Activated B cell treated with CpG ODN at 0.5 μM for 24 hours (primary cell): ENCODE measurements at regions of chr6 and their contacts with region 1.

Region 1: GRCh38 chr6:52995913-52996645 is 995 bp upstream of the GSTA4 start:
- DNase-seq: peak; percentile 27
- ATAC-seq: no peak
- H3K4me3 Mint-ChIP-seq: peak overlapping the region; percentile 94
- H3K27ac Mint-ChIP-seq: peak overlapping the region; percentile 99
- H3K4me1 Mint-ChIP-seq: peaks cover 27% of the 10 kb centered on the region
- H3K27me3 Mint-ChIP-seq: peaks cover 5% of the 10 kb centered on the region
- CTCF ChIP-seq: no peak

Region 2: DNA sequence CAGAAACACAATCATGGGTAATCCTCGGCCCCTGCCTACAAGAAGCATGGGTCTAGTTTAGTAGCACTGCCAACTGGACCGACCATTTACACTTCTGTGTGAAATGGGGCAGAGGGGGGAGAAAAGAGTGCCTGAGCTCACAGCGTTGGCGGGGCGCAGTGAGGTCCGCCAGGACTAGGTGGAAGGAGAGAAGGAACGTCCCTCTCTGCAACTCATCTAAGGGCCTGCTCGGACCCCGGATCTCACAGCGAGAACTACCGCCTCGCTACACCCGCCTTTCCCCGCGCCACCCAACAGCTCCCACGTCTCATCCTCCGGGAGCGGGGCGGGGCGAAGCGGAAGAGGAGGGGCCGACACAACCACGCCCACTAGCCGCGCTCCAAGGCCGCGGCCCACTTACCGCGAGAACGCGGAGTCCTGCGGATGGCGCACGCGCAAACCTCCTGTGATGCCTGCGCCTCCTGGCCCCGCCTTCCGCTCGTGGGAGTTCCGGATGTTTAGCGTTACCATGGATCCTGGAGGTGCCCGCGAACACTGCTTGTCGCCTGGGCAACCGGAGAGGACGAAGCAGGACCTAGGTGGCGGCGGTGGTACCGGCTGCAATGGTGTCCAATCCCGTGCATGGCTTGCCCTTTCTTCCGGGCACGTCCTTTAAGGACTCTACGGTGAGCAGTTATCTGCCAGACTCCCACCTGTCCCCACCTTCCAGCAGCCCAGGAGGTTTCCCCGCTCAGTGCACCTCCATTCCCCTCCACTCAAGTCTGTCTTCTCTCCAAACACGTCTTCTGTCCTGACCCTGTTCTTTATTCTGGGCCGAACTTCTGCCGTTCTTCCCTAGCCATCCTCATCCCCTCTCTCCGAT is 576.0 kb before region 1 on chr6 and contains the start of gene EFHC1:
- CTCF ChIA-PET with region 1: no interaction called
- POLR2A ChIA-PET with region 1: no interaction called
- intact Hi-C with region 1: loop called (anchors 1 kb)
- DNase-seq: peak; percentile 97
- ATAC-seq: peak; percentile 90
- H3K4me3 Mint-ChIP-seq: no peak within 1 kb of the TSS
- H3K27ac Mint-ChIP-seq: no peak within 1 kb of the TSS
- H3K4me1 Mint-ChIP-seq: peaks cover 16% of the 10 kb centered on the region
- H3K27me3 Mint-ChIP-seq: no peaks in the 10 kb centered on the region
- CTCF ChIP-seq: no peak
- total RNA-seq, gene EFHC1: 15.8 and 23.2 TPM in 2 replicates

Region 3: DNA sequence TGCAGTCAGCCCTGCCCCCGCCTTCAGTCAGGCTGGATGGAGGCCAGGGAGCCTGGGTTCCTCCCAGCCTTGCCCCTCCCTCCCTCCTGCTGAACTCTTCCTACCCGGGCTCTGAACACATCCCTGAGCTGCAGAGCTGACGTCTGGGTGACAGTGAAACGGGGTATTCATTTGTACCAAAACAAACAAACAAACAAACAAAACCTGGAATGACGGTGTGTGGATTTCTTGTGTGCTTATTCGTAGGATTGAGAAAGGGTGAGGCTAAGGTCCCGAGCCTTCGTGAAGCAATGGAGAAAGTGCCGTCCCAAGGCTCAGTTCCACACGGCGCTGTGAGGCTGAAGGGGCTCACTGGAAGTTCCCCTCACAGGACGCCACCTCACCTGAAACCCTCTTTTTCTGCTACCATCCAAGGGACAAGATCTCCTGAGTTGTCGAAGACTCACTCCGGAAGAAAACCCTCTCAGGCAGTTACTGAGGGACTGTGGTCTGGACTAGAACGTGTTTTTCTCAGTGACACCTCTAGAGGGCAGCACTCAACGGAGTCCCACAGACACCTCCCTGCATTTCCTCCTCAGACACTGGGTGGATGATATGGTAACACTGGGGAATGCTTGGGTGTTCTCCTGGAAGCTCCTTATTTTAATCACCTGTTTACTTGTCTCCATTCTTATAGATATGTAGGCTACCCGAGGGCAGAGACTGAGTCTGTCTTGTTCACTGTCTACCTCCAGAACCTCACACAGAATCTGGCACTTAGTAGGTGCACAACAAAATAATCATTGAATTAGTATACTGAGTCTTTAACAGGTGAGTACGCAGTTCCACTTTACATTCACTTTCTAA is 113.9 kb before region 1 on chr6:
- CTCF ChIA-PET with region 1: no interaction called
- POLR2A ChIA-PET with region 1: no interaction called
- intact Hi-C with region 1: loop called (anchors 1 kb)
- DNase-seq: peak; percentile 31
- ATAC-seq: peak; percentile 98
- H3K4me3 Mint-ChIP-seq: peak overlapping the region; percentile 82
- H3K27ac Mint-ChIP-seq: peak overlapping the region; percentile 20
- H3K4me1 Mint-ChIP-seq: peaks cover 2% of the 10 kb centered on the region
- H3K27me3 Mint-ChIP-seq: no peaks in the 10 kb centered on the region
- CTCF ChIP-seq: peak; percentile 75

Region 4: GRCh38 chr6:53064726-53065215 is 68.7 kb after region 1 on chr6:
- CTCF ChIA-PET with region 1: interaction called, 4 read pairs
- POLR2A ChIA-PET with region 1: interaction called, 12 read pairs
- intact Hi-C with region 1: no loop called
- DNase-seq: peak; percentile 82
- ATAC-seq: peak; percentile 81
- H3K4me3 Mint-ChIP-seq: peak overlapping the region; percentile 100
- H3K27ac Mint-ChIP-seq: peak overlapping the region; percentile 99
- H3K4me1 Mint-ChIP-seq: peaks cover 57% of the 10 kb centered on the region
- H3K27me3 Mint-ChIP-seq: no peaks in the 10 kb centered on the region
- CTCF ChIP-seq: no peak

Region 5: DNA sequence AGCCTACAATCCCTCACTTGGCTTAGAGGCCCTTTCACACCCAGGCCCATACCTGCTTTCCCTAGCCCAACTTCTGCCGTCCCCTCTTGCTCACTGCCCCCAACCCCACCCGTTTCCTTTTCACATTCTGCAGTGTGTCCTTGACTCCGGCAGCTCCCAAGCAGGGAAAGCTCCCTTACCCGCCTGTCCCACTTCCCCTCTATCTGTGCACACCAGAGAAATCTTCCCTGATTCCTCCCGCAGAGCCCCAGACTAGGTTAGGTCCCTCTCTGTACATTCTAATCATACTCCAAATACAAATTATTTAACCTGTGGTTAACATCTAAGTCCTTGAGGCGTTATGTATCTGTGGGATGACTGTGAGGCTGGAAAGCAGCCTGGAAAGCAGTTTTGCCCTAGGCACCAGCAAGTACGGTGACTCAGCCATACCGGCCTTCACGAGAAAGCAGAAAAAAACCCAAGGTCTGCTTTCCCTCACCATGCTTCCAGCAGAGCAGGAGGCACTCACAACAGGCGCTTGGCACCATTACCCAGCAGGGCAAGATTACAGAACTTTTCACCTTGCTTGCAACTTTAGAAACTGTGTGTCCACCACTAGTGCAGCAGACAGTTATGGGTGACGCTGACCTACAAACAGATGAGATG is 330.4 kb after region 1 on chr6:
- CTCF ChIA-PET with region 1: no interaction called
- POLR2A ChIA-PET with region 1: no interaction called
- intact Hi-C with region 1: no loop called
- DNase-seq: no peak
- ATAC-seq: no peak
- H3K4me3 Mint-ChIP-seq: peak overlapping the region; percentile 6
- H3K27ac Mint-ChIP-seq: peak overlapping the region; percentile 84
- H3K4me1 Mint-ChIP-seq: peaks cover 79% of the 10 kb centered on the region
- H3K27me3 Mint-ChIP-seq: no peaks in the 10 kb centered on the region
- CTCF ChIP-seq: no peak

Region 6: DNA sequence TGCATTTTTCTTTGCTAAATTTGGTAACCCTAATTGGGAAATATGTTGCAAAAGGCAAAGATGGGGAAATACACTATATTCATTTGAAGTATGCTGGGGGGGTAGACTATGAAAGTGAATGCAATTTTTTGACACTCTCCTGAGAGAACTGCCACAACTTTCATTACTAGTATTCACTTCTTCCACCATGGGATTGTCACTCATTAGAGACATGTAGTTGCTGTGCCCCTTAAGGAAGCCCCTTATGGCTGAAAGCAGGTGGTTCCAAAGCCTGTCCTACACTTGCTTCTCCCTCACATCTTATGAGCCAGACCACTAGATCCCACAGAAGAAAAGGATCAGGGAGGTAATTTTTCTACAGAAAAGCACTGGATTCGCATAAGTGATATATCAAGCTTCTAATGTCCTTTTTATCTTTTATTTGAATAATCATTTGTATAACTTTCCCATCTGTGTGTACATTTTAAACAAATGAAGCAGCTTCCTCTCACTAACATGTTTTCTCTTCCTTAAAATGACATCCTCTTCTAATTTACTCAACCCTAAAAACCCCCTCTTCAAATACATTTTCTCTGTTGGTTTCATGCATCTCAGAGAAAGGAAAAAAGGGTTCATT is 465.1 kb after region 1 on chr6:
- CTCF ChIA-PET with region 1: no interaction called
- POLR2A ChIA-PET with region 1: no interaction called
- intact Hi-C with region 1: loop called (anchors 2 kb)
- DNase-seq: no peak
- ATAC-seq: peak; percentile 72
- H3K4me3 Mint-ChIP-seq: peak overlapping the region; percentile 72
- H3K27ac Mint-ChIP-seq: peak overlapping the region; percentile 96
- H3K4me1 Mint-ChIP-seq: peaks cover 94% of the 10 kb centered on the region
- H3K27me3 Mint-ChIP-seq: no peaks in the 10 kb centered on the region
- CTCF ChIP-seq: no peak

Region 7: DNA sequence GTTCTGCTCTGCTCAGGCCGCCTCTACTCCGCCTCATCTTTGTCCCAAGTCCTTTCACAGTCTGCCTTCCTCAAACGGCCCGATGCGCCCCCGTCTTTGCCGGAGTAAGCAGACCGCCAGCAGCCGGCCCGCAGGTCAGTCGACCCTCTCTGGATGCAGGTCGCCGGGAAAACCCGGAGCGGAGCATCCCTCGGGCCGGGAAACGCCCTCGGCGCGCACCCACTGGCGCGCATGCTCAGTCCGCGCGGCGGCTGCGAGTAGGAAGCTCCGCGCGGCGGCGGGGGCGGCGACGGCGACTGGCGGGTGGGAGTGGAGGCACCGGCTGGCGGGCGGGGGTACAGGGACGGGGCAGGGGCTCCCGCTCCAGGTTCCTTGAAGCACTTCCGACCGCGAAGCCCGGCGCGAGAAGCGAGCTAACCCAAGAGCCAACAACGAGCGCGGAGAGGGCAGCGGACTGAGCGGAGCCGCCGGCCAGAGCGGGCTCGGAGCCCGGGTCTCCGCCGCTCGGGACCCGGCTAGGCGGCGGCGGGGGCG is 798.7 kb after region 1 on chr6 and contains the start of gene LRRC1:
- CTCF ChIA-PET with region 1: no interaction called
- POLR2A ChIA-PET with region 1: interaction called, 4 read pairs
- intact Hi-C with region 1: loop called (anchors 1 kb)
- DNase-seq: peak; percentile 94
- ATAC-seq: peak; percentile 76
- H3K4me3 Mint-ChIP-seq: peak within 1 kb of the TSS; percentile 99
- H3K27ac Mint-ChIP-seq: peak within 1 kb of the TSS; percentile 91
- H3K4me1 Mint-ChIP-seq: peaks cover 27% of the 10 kb centered on the region
- H3K27me3 Mint-ChIP-seq: peaks cover 2% of the 10 kb centered on the region
- CTCF ChIP-seq: no peak
- total RNA-seq, gene LRRC1: 3.0 and 4.7 TPM in 2 replicates